Activated CD4-positive, alpha-beta T cell treated with anti-CD3 and anti-CD28 coated beads for 36 hours (primary cell): ENCODE measurements at regions of chr6 and their contacts with region 1.

Region 1: DNA sequence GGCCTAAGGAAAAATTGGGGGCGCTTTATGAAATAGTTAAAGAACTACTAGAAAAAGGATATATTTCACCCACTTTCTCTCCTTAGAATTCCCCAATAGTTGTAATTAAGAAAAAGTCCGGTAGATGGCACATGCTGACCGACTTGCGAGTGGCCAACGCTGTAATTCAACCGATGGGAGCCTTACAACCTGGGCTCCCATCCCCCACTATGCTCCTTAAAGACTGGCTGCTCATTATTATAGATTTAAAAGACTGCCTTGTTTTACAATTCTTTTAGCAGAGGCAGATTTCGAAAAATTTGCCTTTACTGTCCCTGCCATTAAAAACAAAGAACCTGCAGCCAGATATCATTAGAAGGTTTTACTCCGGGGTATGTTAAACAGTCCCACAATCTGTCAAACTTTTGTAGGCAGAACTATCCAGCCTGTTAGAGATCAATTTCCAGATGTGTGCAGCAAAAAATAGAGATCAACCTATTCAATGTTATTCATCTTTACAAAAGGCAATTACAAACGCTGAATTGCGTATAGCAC is 58.5 kb upstream of the PRSS16 start:
- DNase-seq: peak; percentile 75
- ATAC-seq: peak; percentile 89
- H3K4me3 Mint-ChIP-seq: peak overlapping the region; percentile 81
- H3K27ac Mint-ChIP-seq: peak overlapping the region; percentile 76
- H3K4me1 Mint-ChIP-seq: peaks cover 10% of the 10 kb centered on the region
- H3K27me3 Mint-ChIP-seq: peaks cover 2% of the 10 kb centered on the region

Region 2: DNA sequence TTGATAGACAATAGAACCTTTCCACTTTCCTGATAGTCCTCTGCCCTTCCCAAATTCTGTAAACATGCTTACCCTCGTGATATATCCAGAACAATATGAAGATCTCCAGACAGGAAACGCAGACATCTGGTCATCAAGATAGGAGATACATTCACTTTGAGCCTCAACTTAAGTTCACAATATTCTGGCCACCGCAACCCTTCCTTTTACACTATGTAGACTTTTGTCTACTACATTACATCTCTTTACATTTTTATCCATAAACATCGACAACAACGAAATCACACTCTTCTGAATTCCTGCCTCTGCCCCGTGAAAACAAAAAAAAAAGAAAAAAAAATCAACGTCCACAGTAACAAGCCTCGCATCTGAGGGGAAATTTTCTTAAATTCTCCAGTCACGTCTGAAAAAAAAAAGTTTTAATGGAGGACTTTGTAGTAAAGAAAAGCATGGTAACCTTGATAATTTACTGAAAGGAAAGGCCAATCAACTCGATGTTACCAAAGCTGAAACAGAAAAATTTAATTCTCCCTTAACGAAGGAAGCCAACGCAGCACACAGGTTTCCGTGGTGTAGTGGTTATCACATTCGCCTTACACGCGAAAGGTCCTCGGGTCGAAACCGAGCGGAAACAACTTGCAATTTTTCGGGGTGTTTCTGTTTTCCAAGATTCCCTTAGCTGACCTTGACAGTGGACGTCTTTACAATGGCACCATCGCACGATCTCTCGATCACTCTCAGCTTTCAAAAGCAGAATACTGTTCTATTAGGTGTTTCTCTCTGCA is 101.3 kb after region 1 on chr6:
- CTCF ChIA-PET with region 1: no interaction called
- POLR2A ChIA-PET with region 1: no interaction called
- intact Hi-C with region 1: loop called in 1 of 2 experiments (anchors 5 kb)
- DNase-seq: no peak
- ATAC-seq: no peak
- H3K4me3 Mint-ChIP-seq: no peak overlapping the region
- H3K27ac Mint-ChIP-seq: no peak overlapping the region
- H3K4me1 Mint-ChIP-seq: peaks cover 14% of the 10 kb centered on the region
- H3K27me3 Mint-ChIP-seq: peaks cover 80% of the 10 kb centered on the region

Region 3: GRCh38 chr6:27359231-27359630 is 170.3 kb after region 1 on chr6:
- CTCF ChIA-PET with region 1: no interaction called
- POLR2A ChIA-PET with region 1: no interaction called
- intact Hi-C with region 1: no loop called
- DNase-seq: no peak
- ATAC-seq: no peak
- H3K4me3 Mint-ChIP-seq: no peak overlapping the region
- H3K27ac Mint-ChIP-seq: no peak overlapping the region
- H3K4me1 Mint-ChIP-seq: no peaks in the 10 kb centered on the region
- H3K27me3 Mint-ChIP-seq: no peaks in the 10 kb centered on the region

Region 4: DNA sequence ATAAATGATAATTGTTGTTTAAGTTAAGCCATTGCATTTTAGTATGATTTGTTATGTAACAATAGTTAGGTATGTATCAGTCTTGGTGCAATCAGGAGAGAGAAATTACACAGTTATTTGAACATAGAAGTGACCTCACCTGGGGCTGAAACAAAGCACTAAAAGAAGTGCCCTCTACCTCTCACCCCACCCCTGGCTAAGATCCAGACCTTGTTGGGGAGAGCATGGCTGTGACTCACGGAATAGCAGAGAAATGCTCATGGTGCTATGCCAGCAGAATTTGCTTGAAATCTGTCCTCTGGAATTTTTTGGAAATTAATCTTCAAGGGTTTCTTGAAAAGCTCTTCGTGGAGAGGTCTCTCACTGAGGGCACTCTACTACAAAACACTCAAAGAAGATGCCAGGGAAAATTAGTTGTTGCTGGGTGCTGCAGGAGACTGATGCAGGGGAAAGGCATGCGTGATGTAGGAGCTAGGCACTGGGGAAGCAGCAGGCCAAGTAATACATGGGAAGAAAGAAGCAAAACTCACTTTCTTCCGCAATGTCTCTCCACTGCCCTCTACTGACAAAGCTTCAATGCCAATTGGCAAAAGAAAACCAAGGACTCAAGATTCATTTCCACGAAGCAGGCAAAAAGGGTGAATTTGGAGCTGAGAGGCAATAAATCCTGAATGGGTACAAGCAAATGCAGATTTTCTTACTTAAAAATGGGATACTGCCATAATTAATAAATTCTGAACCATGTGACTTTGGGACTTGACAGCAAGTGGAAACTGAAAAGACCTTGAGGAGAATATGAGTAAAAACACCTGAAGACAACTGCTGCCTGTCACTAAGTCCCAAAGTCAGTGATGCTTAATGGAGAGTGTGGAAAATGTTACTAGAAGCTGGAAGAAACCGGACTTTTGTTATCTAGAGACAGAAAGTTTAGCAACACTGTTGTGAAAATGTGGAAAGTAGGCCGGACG is 420.2 kb after region 1 on chr6:
- CTCF ChIA-PET with region 1: no interaction called
- POLR2A ChIA-PET with region 1: no interaction called
- intact Hi-C with region 1: loop called in 1 of 2 experiments (anchors 10 kb)
- DNase-seq: no peak
- ATAC-seq: no peak
- H3K4me3 Mint-ChIP-seq: no peak overlapping the region
- H3K27ac Mint-ChIP-seq: no peak overlapping the region
- H3K4me1 Mint-ChIP-seq: peaks cover 13% of the 10 kb centered on the region
- H3K27me3 Mint-ChIP-seq: peaks cover 46% of the 10 kb centered on the region